H1 (cell line): ENCODE measurements at regions of chr19 and their contacts with region 1.

Region 1: GRCh38 chr19:2524838-2525723 is 49.2 kb downstream of the GADD45B start:
- DNase-seq: no peak
- H3K4me3 ChIP-seq: no peak overlapping the region
- H3K27ac ChIP-seq: peak overlapping the region; percentile 37; the same call in 1 of the 2 replicates
- H3K4me1 ChIP-seq: peaks cover 0 to 13% (median 5%) of the 10 kb centered on the region in 4 experiments; a peak in 4 of 7 replicates
- H3K27me3 ChIP-seq: no peaks in the 10 kb centered on the region
- CTCF ChIP-seq: no peak
- EP300 ChIP-seq: no peak
- POLR2A ChIP-seq: no peak
- RAD21 ChIP-seq: no peak

Region 2: GRCh38 chr19:2446271-2446779 is 78.8 kb before region 1 on chr19:
- CTCF ChIA-PET with region 1: no interaction called
- POLR2A ChIA-PET with region 1: no interaction called
- DNase-seq: no peak
- H3K4me3 ChIP-seq: no peak overlapping the region
- H3K27ac ChIP-seq: no peak overlapping the region
- H3K4me1 ChIP-seq: peaks cover 0 to 7% (median 0%) of the 10 kb centered on the region in 4 experiments; a peak in 1 of 7 replicates
- H3K27me3 ChIP-seq: no peaks in the 10 kb centered on the region
- CTCF ChIP-seq: no peak
- EP300 ChIP-seq: no peak
- POLR2A ChIP-seq: no peak
- RAD21 ChIP-seq: no peak

Region 3: GRCh38 chr19:2543463-2544442 is 18.7 kb after region 1 on chr19:
- CTCF ChIA-PET with region 1: interaction called, 7 read pairs
- POLR2A ChIA-PET with region 1: interaction called, 12 read pairs
- DNase-seq: peak; percentile 81 to 84
- H3K4me3 ChIP-seq: no peak overlapping the region; a peak in 1 of 8 replicates
- H3K27ac ChIP-seq: peak overlapping the region; percentile 40; the same call in 1 of the 2 replicates
- H3K4me1 ChIP-seq: peaks cover 3 to 26% (median 20%) of the 10 kb centered on the region in 4 experiments
- H3K27me3 ChIP-seq: no peaks in the 10 kb centered on the region; a peak in 2 of 7 replicates
- CTCF ChIP-seq: peak in 2 of 3 experiments; percentile 19 to 28; a peak in 2 of 4 replicates
- EP300 ChIP-seq: peak in 1 of 2 experiments; percentile 35; a peak in 1 of 3 replicates
- POLR2A ChIP-seq: peak in 1 of 2 experiments; percentile 81; a peak in 2 of 3 replicates
- RAD21 ChIP-seq: peak; percentile 27 to 53

Region 4: GRCh38 chr19:2619076-2619475 is 94.0 kb after region 1 on chr19:
- CTCF ChIA-PET with region 1: no interaction called
- POLR2A ChIA-PET with region 1: no interaction called
- DNase-seq: no peak
- H3K4me3 ChIP-seq: no peak overlapping the region
- H3K27ac ChIP-seq: no peak overlapping the region
- H3K4me1 ChIP-seq: peaks cover 0 to 3% (median 0%) of the 10 kb centered on the region in 4 experiments; a peak in 1 of 7 replicates
- H3K27me3 ChIP-seq: peaks cover 0 to 7% (median 2%) of the 10 kb centered on the region in 4 experiments; a peak in 1 of 7 replicates
- CTCF ChIP-seq: no peak
- EP300 ChIP-seq: no peak
- POLR2A ChIP-seq: no peak
- RAD21 ChIP-seq: no peak